Gastrocnemius medialis (tissue), 4 donors: ENCODE measurements at regions of chr14 and their contacts with region 1.

Region 1: DNA sequence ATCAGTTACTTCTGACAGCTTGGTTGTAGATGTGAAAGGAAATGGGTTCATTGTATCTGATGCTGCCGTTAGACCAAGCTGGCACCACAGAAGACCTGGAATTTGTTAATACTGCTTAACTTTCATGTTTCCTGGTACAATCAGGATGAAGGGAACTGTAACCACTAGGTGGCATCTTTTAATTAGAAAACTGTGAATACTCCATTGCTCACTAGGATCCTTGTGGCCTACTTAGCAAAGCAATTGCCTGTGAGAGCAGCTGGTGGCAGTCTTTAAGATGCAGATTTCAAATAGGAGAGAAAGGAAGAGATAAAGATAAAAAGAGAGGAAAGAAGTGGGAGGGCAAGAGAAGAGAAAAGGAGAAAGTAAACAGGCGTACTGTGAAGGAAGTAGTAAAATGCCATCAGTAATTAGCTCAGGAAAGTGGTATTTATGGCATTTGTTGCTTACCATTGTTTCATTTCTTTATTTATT is 114.5 kb downstream of the RAD51B start:
- DNase-seq: no peak
- ATAC-seq: peak; percentile 91 to 92
- H3K4me3 ChIP-seq: no peak overlapping the region
- H3K27ac ChIP-seq: peak overlapping the region in 3 of 4 donors; percentile 3 to 48 (median 42)
- H3K4me1 ChIP-seq: no peaks in the 10 kb centered on the region
- H3K27me3 ChIP-seq: no peaks in the 10 kb centered on the region
- CTCF ChIP-seq: peak; percentile 53 to 74 (median 65)
- POLR2A ChIP-seq: no peak

Region 2: GRCh38 chr14:67837011-67837624 is 96.9 kb before region 1 on chr14:
- in situ Hi-C with region 1: no loop called
- intact Hi-C with region 1: loop called (anchors 10 kb)
- DNase-seq: peak in 1 of 2 donors; percentile 20
- ATAC-seq: peak in 1 of 2 donors; percentile 46
- H3K4me3 ChIP-seq: no peak overlapping the region
- H3K27ac ChIP-seq: no peak overlapping the region
- H3K4me1 ChIP-seq: no peaks in the 10 kb centered on the region
- H3K27me3 ChIP-seq: no peaks in the 10 kb centered on the region
- CTCF ChIP-seq: peak; percentile 32 to 53 (median 39)
- POLR2A ChIP-seq: no peak

Region 3: DNA sequence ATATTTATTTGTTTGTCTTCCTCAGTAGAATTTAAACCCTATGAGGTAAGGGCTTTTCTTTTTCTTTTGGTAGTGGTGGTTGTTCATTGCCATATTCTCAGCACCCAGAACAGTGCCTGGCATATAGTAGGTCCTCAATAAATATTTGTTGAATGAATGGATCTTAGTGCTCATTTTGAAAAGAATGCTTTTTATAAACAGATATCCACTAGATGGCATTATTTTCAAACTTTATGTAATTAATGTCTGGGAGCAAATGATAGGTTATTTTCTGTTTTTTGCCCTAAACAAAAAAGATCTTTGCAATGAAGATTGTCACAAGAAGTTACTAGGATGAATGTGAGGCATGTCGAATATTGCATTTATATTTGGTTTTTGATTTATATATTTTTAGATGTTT is 50.3 kb before region 1 on chr14:
- in situ Hi-C with region 1: no loop called
- intact Hi-C with region 1: no loop called
- DNase-seq: no peak
- ATAC-seq: no peak
- H3K4me3 ChIP-seq: no peak overlapping the region
- H3K27ac ChIP-seq: no peak overlapping the region
- H3K4me1 ChIP-seq: no peaks in the 10 kb centered on the region
- H3K27me3 ChIP-seq: no peaks in the 10 kb centered on the region
- CTCF ChIP-seq: peak in 3 of 5 experiments; percentile 13 to 38 (median 26)
- POLR2A ChIP-seq: no peak

Region 4: GRCh38 chr14:68816262-68816942 is 882.4 kb after region 1 on chr14:
- in situ Hi-C with region 1: loop called in 1 of 4 experiments (anchors 10 kb)
- intact Hi-C with region 1: loop called (anchors 2 kb)
- DNase-seq: peak; percentile 81 to 85
- ATAC-seq: peak; percentile 86 to 91
- H3K4me3 ChIP-seq: peak overlapping the region; percentile 55 to 84 (median 75)
- H3K27ac ChIP-seq: peak overlapping the region; percentile 94 to 100 (median 96)
- H3K4me1 ChIP-seq: peaks cover 34 to 36% of the 10 kb centered on the region in 2 donors
- H3K27me3 ChIP-seq: no peaks in the 10 kb centered on the region
- CTCF ChIP-seq: peak; percentile 97 to 100 (median 98)
- POLR2A ChIP-seq: peak; percentile 51 to 65

Region 5: GRCh38 chr14:68824517-68825347 is 890.7 kb after region 1 on chr14:
- in situ Hi-C with region 1: loop called (anchors 5 to 10 kb)
- intact Hi-C with region 1: no loop called
- DNase-seq: peak; percentile 33 to 79
- ATAC-seq: peak; percentile 81 to 93
- H3K4me3 ChIP-seq: no peak overlapping the region
- H3K27ac ChIP-seq: no peak overlapping the region
- H3K4me1 ChIP-seq: peaks cover 0 to 5% of the 10 kb centered on the region in 2 donors
- H3K27me3 ChIP-seq: no peaks in the 10 kb centered on the region
- CTCF ChIP-seq: peak; percentile 70 to 91 (median 81)
- POLR2A ChIP-seq: no peak

Region 6: DNA sequence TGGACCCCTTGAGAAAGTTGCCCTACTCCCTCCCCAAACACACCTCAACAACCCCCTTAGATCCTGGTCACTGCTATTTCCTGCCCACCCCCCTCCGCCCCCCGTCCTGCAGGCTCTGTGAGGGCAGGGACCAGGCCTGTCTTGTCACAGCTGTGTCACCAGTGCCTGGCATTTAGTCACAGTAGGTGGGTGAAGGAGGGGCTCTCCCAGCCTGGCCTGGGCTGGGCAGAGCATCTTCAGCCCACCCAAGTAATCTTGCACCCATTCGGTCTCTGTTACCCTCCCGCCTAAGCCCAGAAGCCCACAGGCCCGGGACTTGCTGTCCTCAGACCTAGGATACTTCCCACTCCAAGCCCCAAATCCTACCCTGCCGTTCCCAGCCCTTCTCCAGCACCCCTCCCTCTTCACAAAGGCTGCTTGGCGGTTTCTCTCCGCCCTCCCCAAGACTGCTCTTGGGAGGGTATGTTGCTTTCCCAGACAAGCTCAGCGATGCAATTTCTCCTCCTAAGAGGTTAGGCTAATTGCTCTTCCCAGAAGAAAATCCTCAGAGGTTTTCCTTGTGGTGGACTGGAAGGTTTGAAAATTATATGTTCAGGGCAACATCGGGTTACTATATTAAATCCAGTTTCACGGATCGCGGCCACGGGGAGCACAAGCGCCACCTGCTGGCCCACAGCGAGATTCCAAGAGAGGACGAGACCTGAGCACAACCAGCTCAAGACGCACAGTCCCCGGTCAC is 909.6 kb after region 1 on chr14:
- in situ Hi-C with region 1: no loop called
- intact Hi-C with region 1: loop called (anchors 5 kb)
- DNase-seq: peak; percentile 33 to 63
- ATAC-seq: peak; percentile 87 to 95
- H3K4me3 ChIP-seq: peak overlapping the region; percentile 31 to 63 (median 43)
- H3K27ac ChIP-seq: no peak overlapping the region
- H3K4me1 ChIP-seq: peaks cover 0 to 3% of the 10 kb centered on the region in 2 donors
- H3K27me3 ChIP-seq: no peaks in the 10 kb centered on the region
- CTCF ChIP-seq: peak; percentile 71 to 96 (median 75)
- POLR2A ChIP-seq: no peak